ENCODE measurements at regions of chr4 and their contacts with region 1.

Region 1: DNA sequence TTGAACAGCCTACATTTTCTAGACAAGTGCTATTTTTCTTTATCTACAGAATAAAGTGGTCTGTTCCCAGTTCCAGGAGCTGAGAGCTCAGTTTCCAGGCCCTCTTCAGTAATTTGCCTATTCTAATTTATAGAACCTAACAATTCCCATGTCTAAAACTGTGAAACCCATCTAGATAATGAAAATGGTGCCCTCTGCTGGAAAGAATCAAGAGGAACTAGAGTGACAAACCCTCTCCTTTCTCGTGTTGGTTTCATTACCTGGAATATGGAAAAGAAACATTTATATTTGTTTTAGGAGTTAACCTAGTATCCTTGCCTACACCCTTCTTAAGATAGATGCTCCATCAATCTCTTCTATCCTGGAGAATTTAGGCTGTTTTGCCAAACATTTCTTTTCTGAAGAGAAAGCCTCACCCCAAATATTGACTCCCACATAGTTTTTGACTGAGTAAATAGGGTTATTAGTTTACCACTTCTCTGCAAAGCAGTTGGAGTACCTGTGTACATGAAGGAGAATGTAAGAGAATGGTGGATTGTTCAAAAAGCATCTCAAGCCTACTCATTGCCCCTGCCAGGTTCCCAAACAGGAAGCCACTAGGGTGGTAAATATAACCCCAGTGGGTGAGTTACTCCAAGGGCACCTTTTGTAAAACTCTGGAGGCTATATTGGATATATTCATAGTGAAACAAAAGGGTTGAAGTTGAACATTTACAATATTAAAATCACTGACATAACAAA is 121.6 kb downstream of the RASL11B start:
- DNase-seq: no peak
- H3K4me3 Mint-ChIP-seq: no peak overlapping the region
- H3K27ac Mint-ChIP-seq: no peak overlapping the region
- H3K4me1 Mint-ChIP-seq: no peaks in the 10 kb centered on the region
- H3K27me3 Mint-ChIP-seq: no peaks in the 10 kb centered on the region

Region 2: DNA sequence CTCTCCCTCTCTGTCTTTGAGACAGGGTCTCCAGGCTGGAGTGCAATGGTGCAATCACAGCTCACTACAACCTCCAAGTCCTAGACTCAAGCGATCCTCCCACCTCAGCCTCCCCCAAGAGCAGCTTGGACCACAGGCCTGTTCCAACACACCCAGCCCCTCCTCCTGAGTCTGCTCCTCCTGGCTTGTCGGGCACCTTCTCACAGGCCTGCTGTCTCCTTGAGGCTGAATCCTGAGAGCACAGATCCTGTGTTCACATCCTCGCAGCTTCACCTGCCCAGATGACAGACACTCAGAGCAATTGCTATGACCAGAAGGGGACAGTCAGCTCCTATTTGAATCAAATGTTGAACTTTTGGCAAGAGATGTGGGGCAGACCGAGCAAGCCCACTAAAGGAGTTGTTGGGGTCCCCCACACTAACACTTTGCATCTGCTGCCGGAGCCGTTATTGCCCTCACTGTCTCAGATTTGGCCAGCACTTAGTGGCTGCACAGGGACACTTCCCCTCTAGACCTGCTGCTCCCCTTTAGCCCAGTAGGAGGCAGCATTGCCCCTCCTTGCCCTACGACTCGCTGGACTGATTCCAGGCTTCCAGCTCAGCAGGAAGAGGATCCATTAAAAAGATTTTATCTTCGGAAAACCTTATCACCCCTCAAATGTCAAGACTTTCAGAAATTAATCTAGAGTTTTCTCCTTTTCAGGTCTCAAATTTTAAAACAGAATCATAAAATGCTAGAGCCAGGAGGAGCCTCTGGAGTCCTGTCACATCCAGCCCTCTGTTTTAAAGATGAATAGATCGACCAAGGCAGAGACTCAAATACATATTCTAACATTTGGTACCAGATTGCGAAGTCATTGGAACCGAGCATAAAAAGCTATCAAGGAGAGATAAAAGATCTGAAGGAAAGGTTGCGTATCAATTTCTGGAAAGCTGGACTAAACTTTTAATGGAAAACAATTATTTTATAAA is 438.3 kb before region 1 on chr4:
- intact Hi-C with region 1: loop called (anchors 2 kb)
- DNase-seq: peak; percentile 22
- H3K4me3 Mint-ChIP-seq: no peak overlapping the region
- H3K27ac Mint-ChIP-seq: no peak overlapping the region
- H3K4me1 Mint-ChIP-seq: no peaks in the 10 kb centered on the region
- H3K27me3 Mint-ChIP-seq: no peaks in the 10 kb centered on the region

Region 3: DNA sequence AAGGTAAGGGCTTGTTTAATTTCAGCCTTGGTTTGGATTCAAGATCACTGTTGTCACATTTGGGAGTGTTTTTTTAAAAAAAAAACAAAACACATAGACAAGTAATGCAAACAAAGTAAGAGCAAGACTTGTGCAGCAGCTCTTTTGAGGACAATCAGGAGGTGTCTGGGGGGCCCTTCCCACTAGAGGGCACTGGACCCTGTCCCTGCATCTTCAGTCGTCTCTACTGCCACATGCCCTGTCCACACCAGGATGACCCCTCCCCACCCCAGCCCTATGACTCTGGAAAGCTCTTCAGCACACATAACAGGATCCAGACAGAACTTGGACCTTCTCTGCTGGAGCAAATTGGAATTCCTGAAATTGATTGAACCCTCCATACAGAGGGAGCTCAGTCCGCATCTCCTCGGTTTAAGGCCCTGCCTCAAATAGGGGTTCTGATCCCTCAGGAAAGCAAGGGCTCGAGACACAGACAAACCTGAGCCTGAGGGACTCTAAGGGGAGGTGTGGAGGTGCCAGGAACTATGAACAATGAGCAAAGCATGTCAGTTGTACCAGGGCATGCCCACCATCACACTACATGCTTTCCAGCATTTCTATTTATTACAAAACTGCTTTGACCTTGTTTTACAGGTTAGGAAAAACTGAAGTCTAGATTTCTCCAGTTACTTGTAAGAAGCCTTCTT is 395.5 kb before region 1 on chr4:
- intact Hi-C with region 1: loop called (anchors 1 kb)
- DNase-seq: no peak
- H3K4me3 Mint-ChIP-seq: no peak overlapping the region
- H3K27ac Mint-ChIP-seq: peak overlapping the region; percentile 45
- H3K4me1 Mint-ChIP-seq: peaks cover 7% of the 10 kb centered on the region
- H3K27me3 Mint-ChIP-seq: peaks cover 5% of the 10 kb centered on the region

Region 4: DNA sequence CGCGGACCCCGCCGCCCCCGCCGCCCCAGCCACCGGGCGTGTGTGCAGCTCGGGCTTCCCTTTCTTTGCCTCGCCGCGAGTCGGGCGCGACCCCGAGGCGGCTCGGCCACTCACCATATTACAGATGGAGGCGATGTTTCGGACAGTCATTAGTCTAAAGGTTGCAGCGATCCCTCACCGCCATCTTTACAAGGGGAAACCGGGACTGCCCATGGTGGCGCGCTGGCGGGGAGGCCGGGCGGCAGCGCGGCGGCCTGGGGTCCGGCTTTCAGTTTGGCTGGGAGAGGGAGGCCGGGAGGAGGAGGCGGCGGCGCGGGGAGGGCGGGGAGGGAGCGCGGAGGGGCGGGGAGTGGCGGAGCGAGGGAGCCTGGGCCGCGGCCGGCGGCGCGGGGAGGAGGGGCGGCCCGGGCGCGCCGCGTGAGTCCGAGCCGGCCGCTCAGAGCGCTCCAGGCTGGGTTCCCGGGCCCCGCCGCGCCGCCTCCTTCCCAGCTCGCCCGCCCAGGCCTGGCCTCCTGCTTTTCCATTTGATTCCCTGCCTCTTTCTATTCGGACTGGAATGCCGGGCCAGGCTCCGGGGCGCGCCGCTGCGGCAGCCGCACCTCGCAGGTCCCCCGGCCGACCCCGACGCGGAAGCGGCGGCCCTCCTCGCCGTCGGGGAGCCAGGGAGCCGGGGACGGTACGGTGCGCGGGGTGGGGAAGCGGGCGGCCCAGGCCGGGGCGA is 324.6 kb before region 1 on chr4 and contains the start of gene USP46:
- intact Hi-C with region 1: loop called (anchors 10 kb)
- DNase-seq: peak; percentile 30
- H3K4me3 Mint-ChIP-seq: peak within 1 kb of the TSS; percentile 86
- H3K27ac Mint-ChIP-seq: peak within 1 kb of the TSS; percentile 73
- H3K4me1 Mint-ChIP-seq: peaks cover 28% of the 10 kb centered on the region
- H3K27me3 Mint-ChIP-seq: peaks cover 14% of the 10 kb centered on the region
- total RNA-seq, gene USP46: 9.9 and 10.1 TPM in 2 replicates

Region 5: DNA sequence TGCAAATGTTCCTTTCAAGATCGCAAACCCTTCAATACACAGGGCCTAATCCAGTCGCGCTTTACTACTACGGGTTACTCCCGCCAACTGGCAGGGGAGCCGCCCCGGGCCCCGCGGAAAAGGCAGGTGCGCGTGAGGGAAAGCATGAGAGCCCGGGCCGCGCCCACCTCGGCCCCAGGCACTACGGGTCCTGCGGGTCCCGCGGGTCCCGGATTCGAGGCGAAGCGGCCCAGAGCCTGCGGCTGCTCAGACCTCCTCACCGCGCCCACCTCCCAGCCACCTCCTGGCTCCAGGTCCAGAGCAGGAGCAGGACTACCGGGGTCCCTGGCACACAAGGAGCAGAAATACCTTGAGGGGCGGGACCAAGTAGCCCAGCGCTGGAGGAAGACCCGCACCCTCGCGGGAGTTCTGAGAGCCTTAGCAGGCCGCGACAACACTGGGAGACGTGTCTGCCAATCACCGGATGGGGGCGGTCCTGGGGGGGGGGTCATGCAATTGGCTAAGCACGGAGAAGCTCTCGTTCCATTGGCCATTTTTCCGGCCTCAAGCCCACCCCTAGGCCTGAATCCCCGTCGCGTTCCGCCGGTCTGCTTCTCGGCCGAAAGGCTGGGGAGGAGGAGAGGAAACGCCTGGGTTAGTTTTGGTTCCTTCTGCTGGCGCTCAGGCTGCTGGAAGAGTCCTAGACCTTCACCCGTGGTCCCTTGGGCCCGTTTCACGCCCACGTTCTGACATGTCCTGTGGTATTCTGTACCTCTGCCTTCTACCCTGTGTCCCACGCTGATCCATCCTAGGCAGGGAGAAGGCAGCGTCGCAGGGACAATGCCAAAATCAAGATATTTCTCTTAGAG is 261.5 kb before region 1 on chr4:
- intact Hi-C with region 1: loop called (anchors 5 kb)
- DNase-seq: peak; percentile 84
- H3K4me3 Mint-ChIP-seq: peak overlapping the region; percentile 80
- H3K27ac Mint-ChIP-seq: peak overlapping the region; percentile 68
- H3K4me1 Mint-ChIP-seq: peaks cover 16% of the 10 kb centered on the region
- H3K27me3 Mint-ChIP-seq: peaks cover 10% of the 10 kb centered on the region